ENCODE measurements at regions of chr15 and their contacts with region 1.

Region 1: DNA sequence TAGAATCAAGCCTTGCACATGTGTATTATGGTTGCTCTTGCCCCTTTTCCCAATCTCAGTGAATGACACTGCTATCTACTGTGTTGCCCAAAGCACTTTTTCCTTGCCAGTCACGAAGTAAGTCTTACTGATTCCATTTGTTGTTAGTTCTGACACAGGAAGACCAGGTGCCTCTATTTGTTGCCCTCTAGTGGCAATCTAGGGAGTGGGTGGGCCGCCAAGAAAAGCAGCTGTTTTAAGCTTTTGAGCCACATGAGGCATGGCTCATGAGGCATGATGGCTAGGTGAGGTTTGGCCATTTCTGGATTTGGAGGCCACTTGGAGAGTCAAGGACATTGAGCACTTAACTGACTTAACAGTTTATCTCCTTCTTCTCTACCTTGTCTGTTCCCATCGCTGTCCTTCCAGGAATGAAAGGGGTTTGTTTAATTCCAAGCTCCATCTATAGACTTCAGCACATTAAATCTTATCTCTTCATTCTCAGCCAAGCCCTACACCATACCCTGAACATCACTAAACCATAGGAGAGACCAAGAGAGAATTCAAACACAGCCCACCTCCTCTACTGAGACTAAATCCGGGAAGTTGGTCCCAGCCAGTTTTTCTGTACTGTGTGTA is 103.1 kb downstream of the HCN4 start:
- DNase-seq: no peak
- ATAC-seq: peak; percentile 36

Region 2: GRCh38 chr15:72783563-72784237 is 481.9 kb before region 1 on chr15 and contains the start of gene ADPGK:
- intact Hi-C with region 1: loop called (anchors 10 kb)
- DNase-seq: peak; percentile 95
- ATAC-seq: peak; percentile 98
- total RNA-seq, gene ADPGK: 50.6 TPM

Region 3: DNA sequence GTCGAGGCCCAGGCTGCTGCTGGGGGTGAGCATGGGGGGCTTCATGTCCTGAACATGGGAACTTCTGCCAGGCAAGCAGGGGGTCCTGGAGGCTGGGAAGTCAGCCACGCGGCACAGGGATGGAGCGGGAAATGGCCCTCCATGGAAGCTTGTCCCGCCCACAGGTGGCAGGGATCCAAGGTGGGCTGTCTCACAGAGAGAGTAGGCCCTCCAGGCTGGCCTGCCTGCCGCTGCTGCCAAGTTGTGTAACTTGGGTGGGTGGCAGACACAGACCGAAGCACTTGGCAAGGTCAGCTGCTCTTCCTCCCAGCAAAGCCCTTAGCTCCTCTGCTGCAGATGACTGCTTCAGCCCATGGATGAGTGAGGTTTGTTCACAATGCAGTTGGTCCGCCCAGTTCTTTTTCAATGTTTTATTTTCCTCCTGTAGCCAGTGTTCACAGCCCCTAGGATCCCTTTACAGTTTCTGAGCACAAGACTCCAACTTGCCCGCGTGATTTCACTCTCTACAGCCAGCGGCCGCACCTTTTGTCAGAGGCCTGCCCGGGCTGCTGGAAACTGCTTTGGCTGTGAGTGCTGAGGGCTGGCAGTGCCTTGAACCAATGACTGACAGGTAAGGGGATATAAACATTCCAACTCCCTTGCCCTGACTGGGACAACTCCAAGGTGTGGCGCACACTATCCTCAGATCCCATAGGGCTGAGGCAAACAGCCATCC is 76.4 kb after region 1 on chr15:
- intact Hi-C with region 1: no loop called
- DNase-seq: no peak
- ATAC-seq: no peak